B cell (primary cell): ENCODE measurements at regions of chr15 and their contacts with region 1.

Region 1: GRCh38 chr15:74799856-74800547 is 12.6 kb upstream of the LMAN1L start:
- DNase-seq: peak; percentile 94
- ATAC-seq: peak; percentile 90
- H3K4me3 ChIP-seq: no peak overlapping the region
- H3K4me3 Mint-ChIP-seq: peak overlapping the region; percentile 78
- H3K27ac ChIP-seq: peak overlapping the region; percentile 89 to 93
- H3K27ac Mint-ChIP-seq: peak overlapping the region; percentile 90
- H3K4me1 ChIP-seq: peaks cover 56 to 61% of the 10 kb centered on the region in 2 donors
- H3K4me1 Mint-ChIP-seq: peaks cover 52% of the 10 kb centered on the region
- H3K27me3 ChIP-seq: no peaks in the 10 kb centered on the region
- H3K27me3 Mint-ChIP-seq: no peaks in the 10 kb centered on the region
- CTCF ChIP-seq: peak; percentile 93

Region 2: GRCh38 chr15:74580538-74581350 is 219.3 kb before region 1 on chr15:
- CTCF ChIA-PET with region 1: no interaction called
- POLR2A ChIA-PET with region 1: no interaction called
- intact Hi-C with region 1: no loop called
- DNase-seq: no peak
- ATAC-seq: no peak
- H3K4me3 ChIP-seq: no peak overlapping the region
- H3K4me3 Mint-ChIP-seq: no peak overlapping the region
- H3K27ac ChIP-seq: no peak overlapping the region
- H3K27ac Mint-ChIP-seq: no peak overlapping the region
- H3K4me1 ChIP-seq: no peaks in the 10 kb centered on the region
- H3K4me1 Mint-ChIP-seq: no peaks in the 10 kb centered on the region
- H3K27me3 ChIP-seq: no peaks in the 10 kb centered on the region
- H3K27me3 Mint-ChIP-seq: no peaks in the 10 kb centered on the region
- CTCF ChIP-seq: no peak

Region 3: GRCh38 chr15:74781431-74782258 is 18.4 kb before region 1 on chr15 and contains the start of gene CSK:
- CTCF ChIA-PET with region 1: interaction called, 2,548 read pairs
- POLR2A ChIA-PET with region 1: interaction called, 572 read pairs
- intact Hi-C with region 1: loop called (anchors 1 kb)
- DNase-seq: peak; percentile 91
- ATAC-seq: peak; percentile 53
- H3K4me3 ChIP-seq: peak within 1 kb of the TSS; percentile 86 to 99 (median 93)
- H3K4me3 Mint-ChIP-seq: peak within 1 kb of the TSS; percentile 93
- H3K27ac ChIP-seq: peak within 1 kb of the TSS; percentile 91 to 99
- H3K27ac Mint-ChIP-seq: peak within 1 kb of the TSS; percentile 98
- H3K4me1 ChIP-seq: peaks cover 67 to 84% of the 10 kb centered on the region in 2 donors
- H3K4me1 Mint-ChIP-seq: peaks cover 85% of the 10 kb centered on the region
- H3K27me3 ChIP-seq: no peaks in the 10 kb centered on the region
- H3K27me3 Mint-ChIP-seq: no peaks in the 10 kb centered on the region
- CTCF ChIP-seq: peak; percentile 59
- total RNA-seq, gene CSK: 325 and 343 TPM in 2 replicates

Region 4: DNA sequence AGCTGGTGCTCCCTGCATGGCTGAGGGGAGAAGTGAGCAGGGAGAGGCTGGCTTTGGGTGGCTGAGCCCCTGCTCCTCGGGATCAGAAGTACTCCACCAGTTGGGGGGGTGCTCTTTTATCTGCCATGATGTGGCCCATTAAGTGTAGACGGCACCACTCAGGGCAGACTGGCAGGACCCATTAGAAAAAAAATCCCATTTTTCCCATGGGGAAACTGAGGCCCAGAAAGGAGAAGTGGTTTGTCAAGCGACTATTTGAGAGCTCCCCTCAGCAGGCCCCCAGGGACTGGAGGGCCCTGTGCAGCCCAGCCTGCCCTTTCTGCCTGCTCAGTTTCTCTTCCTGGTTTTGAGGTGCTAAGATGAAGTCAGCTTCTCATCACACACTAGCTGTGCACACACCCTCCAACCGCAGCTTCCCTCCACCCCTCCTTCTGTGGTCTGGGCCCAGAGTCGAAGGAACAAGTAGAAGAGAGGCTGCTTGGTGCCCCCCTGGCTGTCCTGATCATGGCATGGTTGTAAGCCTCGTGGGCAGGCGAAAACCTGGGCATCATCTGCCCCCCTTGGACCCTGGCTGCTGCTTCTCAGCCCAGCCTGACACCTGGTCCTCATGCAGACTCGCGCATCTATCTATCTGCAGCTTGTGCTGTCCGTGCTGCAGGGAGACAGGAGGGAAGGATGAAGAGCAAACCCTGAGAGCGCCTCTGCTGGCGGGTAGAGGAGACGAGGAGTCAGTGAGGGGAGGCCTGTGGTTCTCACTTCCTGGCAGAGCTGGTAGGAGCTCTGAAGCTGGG is 12.6 kb before region 1 on chr15:
- CTCF ChIA-PET with region 1: interaction called, 2,548 read pairs
- POLR2A ChIA-PET with region 1: interaction called, 572 read pairs
- intact Hi-C with region 1: loop called (anchors 1 kb)
- DNase-seq: peak; percentile 98
- ATAC-seq: peak; percentile 57
- H3K4me3 ChIP-seq: peak overlapping the region; percentile 67 to 99 (median 86)
- H3K4me3 Mint-ChIP-seq: peak overlapping the region; percentile 93
- H3K27ac ChIP-seq: peak overlapping the region; percentile 90 to 93
- H3K27ac Mint-ChIP-seq: peak overlapping the region; percentile 99
- H3K4me1 ChIP-seq: peaks cover 61 to 91% of the 10 kb centered on the region in 2 donors
- H3K4me1 Mint-ChIP-seq: peaks cover 94% of the 10 kb centered on the region
- H3K27me3 ChIP-seq: no peaks in the 10 kb centered on the region
- H3K27me3 Mint-ChIP-seq: no peaks in the 10 kb centered on the region
- CTCF ChIP-seq: peak; percentile 75

Region 5: GRCh38 chr15:74821091-74821789 is 21.2 kb after region 1 on chr15:
- CTCF ChIA-PET with region 1: interaction called, 15 read pairs
- POLR2A ChIA-PET with region 1: no interaction called
- intact Hi-C with region 1: no loop called
- DNase-seq: peak; percentile 74
- ATAC-seq: peak; percentile 86
- H3K4me3 ChIP-seq: peak overlapping the region in 3 of 5 experiments; percentile 11 to 25 (median 22)
- H3K4me3 Mint-ChIP-seq: peak overlapping the region; percentile 66
- H3K27ac ChIP-seq: no peak overlapping the region
- H3K27ac Mint-ChIP-seq: peak overlapping the region; percentile 39
- H3K4me1 ChIP-seq: peaks cover 35 to 40% of the 10 kb centered on the region in 2 donors
- H3K4me1 Mint-ChIP-seq: peaks cover 44% of the 10 kb centered on the region
- H3K27me3 ChIP-seq: peaks cover 0 to 22% (median 6%) of the 10 kb centered on the region in 4 experiments
- H3K27me3 Mint-ChIP-seq: peaks cover 7% of the 10 kb centered on the region
- CTCF ChIP-seq: no peak

Region 6: GRCh38 chr15:74835307-74835823 is 35.4 kb after region 1 on chr15:
- CTCF ChIA-PET with region 1: interaction called, 17 read pairs
- POLR2A ChIA-PET with region 1: interaction called, 3 read pairs
- intact Hi-C with region 1: loop called (anchors 1 kb)
- DNase-seq: peak; percentile 55
- ATAC-seq: peak; percentile 62
- H3K4me3 ChIP-seq: no peak overlapping the region
- H3K4me3 Mint-ChIP-seq: no peak overlapping the region
- H3K27ac ChIP-seq: no peak overlapping the region
- H3K27ac Mint-ChIP-seq: no peak overlapping the region
- H3K4me1 ChIP-seq: peaks cover 0 to 13% of the 10 kb centered on the region in 2 donors
- H3K4me1 Mint-ChIP-seq: peaks cover 8% of the 10 kb centered on the region
- H3K27me3 ChIP-seq: peaks cover 0 to under 1% (median 0%) of the 10 kb centered on the region in 4 experiments
- H3K27me3 Mint-ChIP-seq: no peaks in the 10 kb centered on the region
- CTCF ChIP-seq: peak; percentile 77

Region 7: DNA sequence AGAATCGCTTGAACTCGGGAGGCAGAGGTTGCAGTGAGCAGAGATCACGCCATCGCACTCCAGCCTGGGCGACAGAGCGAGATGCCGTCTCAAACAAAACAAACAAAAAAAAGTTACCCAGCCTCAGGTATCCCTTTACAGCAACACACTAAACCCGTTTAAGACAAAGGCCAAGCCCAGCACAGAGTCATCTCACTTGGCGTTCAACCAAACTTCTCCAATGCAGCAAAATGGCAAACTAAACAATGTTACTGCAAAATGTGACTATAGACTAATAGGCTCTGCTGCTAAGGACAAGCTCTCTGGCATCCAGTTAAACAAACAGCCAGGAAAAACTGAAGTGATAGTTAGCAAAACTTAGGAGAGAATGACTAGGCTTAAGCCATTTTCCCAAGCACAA is 113.0 kb after region 1 on chr15:
- CTCF ChIA-PET with region 1: no interaction called
- POLR2A ChIA-PET with region 1: no interaction called
- intact Hi-C with region 1: no loop called
- DNase-seq: no peak
- ATAC-seq: no peak
- H3K4me3 ChIP-seq: no peak overlapping the region
- H3K4me3 Mint-ChIP-seq: no peak overlapping the region
- H3K27ac ChIP-seq: no peak overlapping the region
- H3K27ac Mint-ChIP-seq: no peak overlapping the region
- H3K4me1 ChIP-seq: no peaks in the 10 kb centered on the region
- H3K4me1 Mint-ChIP-seq: no peaks in the 10 kb centered on the region
- H3K27me3 ChIP-seq: no peaks in the 10 kb centered on the region
- H3K27me3 Mint-ChIP-seq: no peaks in the 10 kb centered on the region
- CTCF ChIP-seq: no peak

Region 8: GRCh38 chr15:74950078-74951000 is 150.3 kb after region 1 on chr15:
- CTCF ChIA-PET with region 1: interaction called, 37 read pairs
- POLR2A ChIA-PET with region 1: no interaction called
- intact Hi-C with region 1: no loop called
- DNase-seq: peak; percentile 86
- ATAC-seq: peak; percentile 95
- H3K4me3 ChIP-seq: no peak overlapping the region
- H3K4me3 Mint-ChIP-seq: no peak overlapping the region
- H3K27ac ChIP-seq: no peak overlapping the region
- H3K27ac Mint-ChIP-seq: no peak overlapping the region
- H3K4me1 ChIP-seq: peaks cover 6 to 8% of the 10 kb centered on the region in 2 donors
- H3K4me1 Mint-ChIP-seq: peaks cover 7% of the 10 kb centered on the region
- H3K27me3 ChIP-seq: peaks cover 0 to 22% (median 2%) of the 10 kb centered on the region in 4 experiments
- H3K27me3 Mint-ChIP-seq: peaks cover 7% of the 10 kb centered on the region
- CTCF ChIP-seq: peak; percentile 97

Region 9: GRCh38 chr15:75450307-75451201 is 650.6 kb after region 1 on chr15:
- CTCF ChIA-PET with region 1: no interaction called
- POLR2A ChIA-PET with region 1: no interaction called
- intact Hi-C with region 1: no loop called
- DNase-seq: peak; percentile 96
- ATAC-seq: peak; percentile 24
- H3K4me3 ChIP-seq: peak overlapping the region; percentile 67 to 94 (median 91)
- H3K4me3 Mint-ChIP-seq: peak overlapping the region; percentile 98
- H3K27ac ChIP-seq: peak overlapping the region; percentile 58 to 98
- H3K27ac Mint-ChIP-seq: peak overlapping the region; percentile 99
- H3K4me1 ChIP-seq: peaks cover 42 to 47% of the 10 kb centered on the region in 2 donors
- H3K4me1 Mint-ChIP-seq: peaks cover 60% of the 10 kb centered on the region
- H3K27me3 ChIP-seq: no peaks in the 10 kb centered on the region
- H3K27me3 Mint-ChIP-seq: no peaks in the 10 kb centered on the region
- CTCF ChIP-seq: no peak

Region 10: DNA sequence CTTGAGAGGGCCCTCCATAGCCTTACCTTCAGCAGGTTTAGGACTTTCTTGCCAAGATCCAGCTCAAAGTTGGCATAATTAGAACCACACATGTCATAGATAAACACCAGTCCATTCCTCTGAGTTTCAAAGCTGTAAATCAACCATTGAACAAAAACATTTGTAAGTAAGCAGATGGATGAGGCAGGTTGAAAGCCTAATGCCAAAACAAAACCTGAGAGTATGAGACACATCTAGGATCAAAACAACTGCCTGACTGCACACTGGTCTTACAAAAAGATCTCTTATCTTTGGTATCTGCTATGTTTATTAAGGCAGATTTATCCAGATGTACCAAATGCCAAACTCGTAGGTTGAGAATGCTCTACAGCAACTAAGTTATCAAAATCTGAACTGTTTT is 717.2 kb after region 1 on chr15:
- CTCF ChIA-PET with region 1: no interaction called
- POLR2A ChIA-PET with region 1: no interaction called
- intact Hi-C with region 1: no loop called
- DNase-seq: no peak
- ATAC-seq: no peak
- H3K4me3 ChIP-seq: no peak overlapping the region
- H3K4me3 Mint-ChIP-seq: no peak overlapping the region
- H3K27ac ChIP-seq: no peak overlapping the region
- H3K27ac Mint-ChIP-seq: no peak overlapping the region
- H3K4me1 ChIP-seq: no peaks in the 10 kb centered on the region
- H3K4me1 Mint-ChIP-seq: no peaks in the 10 kb centered on the region
- H3K27me3 ChIP-seq: no peaks in the 10 kb centered on the region
- H3K27me3 Mint-ChIP-seq: no peaks in the 10 kb centered on the region
- CTCF ChIP-seq: no peak